ENCODE measurements at regions of chr4 and their contacts with region 1.

Region 1: DNA sequence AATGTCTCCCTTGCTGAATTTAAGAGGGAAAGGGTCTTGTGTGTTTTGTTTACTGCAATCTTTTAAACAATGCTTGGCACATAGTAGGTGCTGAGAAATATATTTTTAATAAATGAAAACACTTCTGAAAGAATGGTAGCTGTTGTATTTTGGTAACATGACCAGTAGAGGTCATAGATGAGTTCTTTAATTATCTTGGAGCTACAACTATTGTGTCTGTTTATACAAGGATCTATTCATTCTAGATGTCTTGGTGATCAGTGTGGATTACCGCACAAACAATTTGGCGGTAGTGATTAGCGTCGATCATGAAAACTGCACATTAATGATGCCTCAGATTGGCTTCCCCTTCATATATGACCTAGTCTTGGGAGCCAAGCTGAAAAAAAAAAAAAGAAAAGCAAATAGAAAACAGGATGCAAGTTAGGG is 21.4 kb upstream of the SCRG1 start:
- DNase-seq: no peak
- H3K4me3 ChIP-seq: no peak overlapping the region
- H3K27ac ChIP-seq: no peak overlapping the region
- H3K4me1 ChIP-seq: peaks cover 0 to 10% of the 10 kb centered on the region in 2 donors
- H3K27me3 ChIP-seq: no peaks in the 10 kb centered on the region
- CTCF ChIP-seq: peak; percentile 25 to 59 (median 42)
- POLR2A ChIP-seq: no peak

Region 2: GRCh38 chr4:173318648-173319211 is 101.6 kb before region 1 on chr4:
- intact Hi-C with region 1: loop called (anchors 5 kb)
- DNase-seq: no peak
- H3K4me3 ChIP-seq: no peak overlapping the region
- H3K27ac ChIP-seq: no peak overlapping the region
- H3K4me1 ChIP-seq: peaks cover 0 to 4% of the 10 kb centered on the region in 2 donors
- H3K27me3 ChIP-seq: no peaks in the 10 kb centered on the region
- CTCF ChIP-seq: peak; percentile 13 to 70 (median 54)
- POLR2A ChIP-seq: no peak

Region 3: DNA sequence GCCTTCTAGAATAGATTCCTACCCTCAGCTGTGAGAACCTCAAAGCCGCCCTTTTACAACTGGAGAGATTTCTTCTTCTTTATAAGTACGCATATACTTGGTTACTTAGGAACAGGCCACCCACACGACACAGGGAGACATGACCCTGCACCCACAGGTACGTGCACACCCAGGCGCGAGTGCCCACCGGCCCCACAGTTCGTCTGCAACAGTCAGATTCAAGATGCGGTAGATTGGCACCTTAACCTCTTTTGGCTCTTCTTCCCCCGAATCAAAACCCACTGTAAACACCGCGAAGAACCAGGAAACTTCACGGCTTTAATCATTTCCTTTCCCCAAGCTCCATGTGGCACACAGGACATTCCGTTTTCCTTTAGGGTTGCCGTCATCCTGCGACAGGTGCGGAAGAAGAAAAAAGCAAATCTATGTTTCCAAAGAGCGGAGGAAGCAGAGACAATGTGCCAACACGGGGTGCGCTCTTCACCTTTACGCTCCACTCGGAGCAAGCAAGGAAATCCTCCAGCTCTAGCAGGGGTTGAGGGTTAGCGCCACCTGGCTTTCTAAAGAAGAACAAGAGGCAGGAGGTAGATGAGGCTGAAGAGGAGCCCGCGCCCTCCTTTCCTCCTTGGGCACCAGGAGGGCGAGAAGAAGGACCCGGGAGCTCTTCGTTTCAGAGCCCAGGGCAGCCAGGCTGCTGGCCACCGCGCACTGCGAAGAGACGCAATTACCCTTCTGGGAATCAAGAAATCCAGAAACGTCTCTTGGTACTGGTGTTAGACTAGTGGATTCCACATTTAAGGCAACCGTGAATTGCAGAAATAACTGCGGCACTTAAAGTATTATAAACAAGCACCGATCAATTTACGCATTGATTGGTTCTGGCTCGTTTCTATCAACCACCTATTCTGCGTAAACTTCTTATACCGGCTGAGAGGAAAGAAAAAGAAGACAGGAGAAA is 74.0 kb after region 1 on chr4:
- intact Hi-C with region 1: loop called in 1 of 2 experiments (anchors 10 kb)
- DNase-seq: peak in 6 of 7 donors; percentile 31 to 83 (median 54)
- H3K4me3 ChIP-seq: peak overlapping the region in 1 of 4 donors; percentile 36
- H3K27ac ChIP-seq: no peak overlapping the region
- H3K4me1 ChIP-seq: no peaks in the 10 kb centered on the region
- H3K27me3 ChIP-seq: peaks cover 13% of the 10 kb centered on the region
- CTCF ChIP-seq: peak; percentile 40 to 70 (median 60)
- POLR2A ChIP-seq: no peak

Measured in adrenal gland (tissue), 19 donors.